ENCODE measurements at regions of chr2 and their contacts with region 1.

Region 1: GRCh38 chr2:219261024-219261855 is 7.5 kb upstream of the TUBA4A start:
- DNase-seq: peak in 2 of 4 experiments; percentile 16 to 41
- ATAC-seq: peak; percentile 71
- H3K4me3 ChIP-seq: no peak overlapping the region
- H3K27ac ChIP-seq: peak overlapping the region; percentile 56
- H3K4me1 ChIP-seq: peaks cover 4 to 21% of the 10 kb centered on the region in 2 experiments; a peak in 3 of 5 replicates
- H3K27me3 ChIP-seq: no peaks in the 10 kb centered on the region
- CTCF ChIP-seq: no peak
- EP300 ChIP-seq: peak; percentile 28; the same call in 1 of the 2 replicates
- POLR2A ChIP-seq: no peak
- RAD21 ChIP-seq: no peak

Region 2: GRCh38 chr2:219245148-219245898 is 15.9 kb before region 1 on chr2 and contains the starts of genes GLB1L and STK16:
- CTCF ChIA-PET with region 1: no interaction called
- POLR2A ChIA-PET with region 1: interaction called, 22 read pairs
- in situ Hi-C with region 1: no loop called
- intact Hi-C with region 1: no loop called
- DNase-seq: peak; percentile 89 to 93 (median 90)
- ATAC-seq: peak; percentile 92
- H3K4me3 ChIP-seq: peak within 1 kb of the TSS; percentile 93
- H3K27ac ChIP-seq: peak within 1 kb of the TSS; percentile 95
- H3K4me1 ChIP-seq: peaks cover 21 to 32% of the 10 kb centered on the region in 2 experiments; a peak in 4 of 5 replicates
- H3K27me3 ChIP-seq: no peaks in the 10 kb centered on the region
- CTCF ChIP-seq: 0 out of 6 replicates have a peak, but pooled peaks of 1 of the 3 experiments have one; percentile 2
- EP300 ChIP-seq: peak; percentile 36; the same call in 1 of the 2 replicates
- POLR2A ChIP-seq: peak; percentile 92
- RAD21 ChIP-seq: no peak
- polyA plus RNA-seq, gene GLB1L: 0.42 to 0.59 TPM
- polyA plus RNA-seq, gene STK16: 5.6 to 12.9 TPM

Region 3: DNA sequence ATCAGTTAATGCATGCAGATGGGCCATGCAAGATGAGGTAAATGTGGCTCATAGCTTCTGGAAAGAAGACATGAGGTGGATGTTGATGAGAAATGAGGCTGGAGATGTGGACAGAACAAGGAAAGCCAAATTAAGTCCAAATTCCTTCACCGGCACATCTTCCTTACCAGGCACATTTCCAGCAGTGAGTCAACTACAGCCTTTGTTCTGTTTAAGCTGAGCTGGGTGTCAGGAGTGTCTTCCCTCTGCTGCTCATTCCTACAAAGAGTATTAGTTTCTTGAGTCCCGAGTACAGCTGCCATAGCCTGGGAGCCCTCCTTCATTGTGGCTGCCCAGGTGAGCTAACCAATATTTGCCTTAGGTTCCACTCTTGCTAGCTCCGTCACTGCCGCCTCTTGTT is 1311.1 kb after region 1 on chr2:
- CTCF ChIA-PET with region 1: no interaction called
- POLR2A ChIA-PET with region 1: no interaction called
- in situ Hi-C with region 1: no loop called
- intact Hi-C with region 1: no loop called
- DNase-seq: no peak
- ATAC-seq: no peak
- H3K4me3 ChIP-seq: no peak overlapping the region
- H3K27ac ChIP-seq: no peak overlapping the region
- H3K4me1 ChIP-seq: no peaks in the 10 kb centered on the region
- H3K27me3 ChIP-seq: no peaks in the 10 kb centered on the region
- CTCF ChIP-seq: no peak
- EP300 ChIP-seq: no peak
- POLR2A ChIP-seq: no peak
- RAD21 ChIP-seq: no peak